PC-3 (cell line): ENCODE measurements at regions of chrX and their contacts with region 1.

Region 1: DNA sequence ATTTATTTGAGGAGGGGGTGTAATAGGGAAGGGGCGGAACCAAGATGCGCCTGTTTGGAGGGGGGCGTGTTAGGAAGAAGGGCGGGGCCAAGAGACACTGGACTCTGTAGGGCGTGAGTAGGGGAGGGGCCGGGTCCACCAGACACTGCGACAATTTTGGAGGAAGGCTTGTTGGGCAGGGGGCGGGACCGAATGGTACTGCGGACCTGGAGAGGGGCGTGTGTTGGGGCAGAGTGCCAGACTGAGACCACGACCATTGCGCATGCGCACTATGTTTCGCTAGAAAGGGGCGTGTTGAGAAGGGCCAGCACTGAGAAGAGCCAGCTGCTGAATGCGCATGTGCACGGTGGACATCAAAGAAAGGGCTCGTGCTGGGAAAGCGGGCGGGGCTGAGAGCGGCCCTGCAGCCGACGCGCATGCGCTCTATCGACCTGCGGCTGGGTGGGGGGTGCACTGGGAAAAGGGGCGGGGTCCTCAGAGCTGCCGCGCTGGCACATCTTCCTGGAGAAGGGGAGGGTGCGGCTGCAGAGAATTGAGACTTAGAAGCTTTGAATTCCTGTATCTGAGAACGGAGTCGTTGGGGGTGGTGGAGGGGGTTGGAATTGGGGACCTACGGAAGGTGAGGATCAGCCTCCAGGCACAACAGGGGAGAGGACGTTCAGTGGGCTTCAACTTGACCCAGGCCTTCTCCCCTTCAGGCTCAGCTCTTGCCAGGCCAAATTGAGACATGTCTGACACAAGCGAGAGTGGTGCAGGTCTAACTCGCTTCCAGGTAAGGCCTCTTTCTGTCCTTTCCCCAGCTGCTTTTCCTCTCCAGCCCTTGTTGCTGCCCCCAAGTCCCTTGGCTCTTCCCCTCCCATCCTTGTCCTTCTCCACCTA is 1.3 kb downstream of the MAGED2 start:
- DNase-seq: peak; percentile 96
- ATAC-seq: peak; percentile 88
- H3K4me3 ChIP-seq: peak overlapping the region; percentile 83
- H3K27ac ChIP-seq: peak overlapping the region; percentile 33; the same call in 1 of the 2 replicates
- H3K4me1 ChIP-seq: 0 out of 2 replicates have a peak, but pooled peaks cover 7% of the 10 kb centered on the region
- H3K27me3 ChIP-seq: peaks cover under 1% of the 10 kb centered on the region
- CTCF ChIP-seq: no peak

Region 2: GRCh38 chrX:54248309-54248708 is 560.5 kb before region 1 on chrX:
- CTCF ChIA-PET with region 1: no interaction called
- POLR2A ChIA-PET with region 1: no interaction called
- intact Hi-C with region 1: loop called (anchors 10 kb)
- DNase-seq: peak; percentile 61
- ATAC-seq: peak; percentile 81
- H3K4me3 ChIP-seq: no peak overlapping the region
- H3K27ac ChIP-seq: no peak overlapping the region
- H3K4me1 ChIP-seq: no peaks in the 10 kb centered on the region
- H3K27me3 ChIP-seq: no peaks in the 10 kb centered on the region
- CTCF ChIP-seq: peak; percentile 65

Region 3: DNA sequence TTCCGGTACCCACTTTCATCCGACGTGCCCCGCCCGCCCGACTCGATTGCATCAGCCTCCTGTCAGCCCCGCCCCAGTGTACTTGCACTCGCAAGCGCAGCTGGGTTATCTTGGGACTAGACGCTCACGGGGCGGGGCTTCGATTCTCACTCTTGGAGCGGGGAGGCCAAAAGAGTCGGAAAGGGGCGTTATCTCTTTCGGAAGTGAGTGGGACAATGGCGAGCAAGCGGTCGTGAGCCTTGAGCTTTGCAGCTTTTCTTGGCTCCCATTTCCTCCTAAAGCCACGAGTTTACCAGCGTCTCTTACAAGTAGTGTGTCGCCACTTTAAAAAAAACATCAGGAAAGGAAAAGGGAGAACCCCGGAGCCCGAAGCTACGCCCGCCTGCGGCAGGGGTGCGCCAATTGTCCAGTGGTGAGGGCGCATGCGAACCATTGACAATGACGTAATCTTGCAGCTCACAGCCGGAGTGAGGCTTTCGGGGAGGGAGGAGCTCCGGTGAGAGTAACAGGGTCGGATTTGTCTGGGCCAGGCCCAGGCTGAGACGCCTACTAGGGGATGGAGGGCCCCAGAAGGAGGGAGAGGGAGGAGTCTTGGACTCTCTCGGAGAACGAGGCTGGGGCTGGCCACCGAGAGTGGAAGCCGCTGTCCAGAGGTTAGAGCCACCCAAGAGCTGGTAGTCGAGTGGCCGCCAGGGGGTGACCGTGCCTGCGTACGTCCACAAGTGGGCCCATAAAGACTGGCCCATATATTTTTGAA is 169.3 kb before region 1 on chrX:
- CTCF ChIA-PET with region 1: no interaction called
- POLR2A ChIA-PET with region 1: interaction called, 6 read pairs
- intact Hi-C with region 1: loop called (anchors 1 kb)
- DNase-seq: peak; percentile 91
- ATAC-seq: peak; percentile 94
- H3K4me3 ChIP-seq: peak overlapping the region; percentile 77
- H3K27ac ChIP-seq: peak overlapping the region; percentile 82
- H3K4me1 ChIP-seq: peaks cover 5% of the 10 kb centered on the region
- H3K27me3 ChIP-seq: no peaks in the 10 kb centered on the region
- CTCF ChIP-seq: peak; percentile 78

Region 4: DNA sequence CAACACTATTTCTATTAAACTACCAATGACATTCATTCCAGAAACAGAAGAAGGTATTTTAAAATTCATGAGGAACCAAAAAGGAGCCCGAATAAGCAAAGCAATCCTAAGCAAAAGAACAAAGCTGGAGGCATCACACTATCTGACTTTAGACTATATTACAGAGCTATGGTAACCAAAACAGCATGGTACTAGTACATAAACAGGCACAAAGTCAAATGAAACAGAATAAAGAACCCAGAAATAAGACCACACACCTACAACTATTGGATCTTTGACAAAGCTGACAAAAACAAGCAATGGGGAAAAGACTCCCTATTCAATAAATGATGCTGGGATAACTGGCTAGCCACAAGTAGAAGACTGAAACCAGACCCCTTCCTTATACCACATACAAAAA is 133.1 kb before region 1 on chrX:
- CTCF ChIA-PET with region 1: no interaction called
- POLR2A ChIA-PET with region 1: interaction called, 14 read pairs
- intact Hi-C with region 1: no loop called
- DNase-seq: no peak
- ATAC-seq: no peak
- H3K4me3 ChIP-seq: no peak overlapping the region
- H3K27ac ChIP-seq: no peak overlapping the region
- H3K4me1 ChIP-seq: no peaks in the 10 kb centered on the region
- H3K27me3 ChIP-seq: no peaks in the 10 kb centered on the region
- CTCF ChIP-seq: no peak

Region 5: DNA sequence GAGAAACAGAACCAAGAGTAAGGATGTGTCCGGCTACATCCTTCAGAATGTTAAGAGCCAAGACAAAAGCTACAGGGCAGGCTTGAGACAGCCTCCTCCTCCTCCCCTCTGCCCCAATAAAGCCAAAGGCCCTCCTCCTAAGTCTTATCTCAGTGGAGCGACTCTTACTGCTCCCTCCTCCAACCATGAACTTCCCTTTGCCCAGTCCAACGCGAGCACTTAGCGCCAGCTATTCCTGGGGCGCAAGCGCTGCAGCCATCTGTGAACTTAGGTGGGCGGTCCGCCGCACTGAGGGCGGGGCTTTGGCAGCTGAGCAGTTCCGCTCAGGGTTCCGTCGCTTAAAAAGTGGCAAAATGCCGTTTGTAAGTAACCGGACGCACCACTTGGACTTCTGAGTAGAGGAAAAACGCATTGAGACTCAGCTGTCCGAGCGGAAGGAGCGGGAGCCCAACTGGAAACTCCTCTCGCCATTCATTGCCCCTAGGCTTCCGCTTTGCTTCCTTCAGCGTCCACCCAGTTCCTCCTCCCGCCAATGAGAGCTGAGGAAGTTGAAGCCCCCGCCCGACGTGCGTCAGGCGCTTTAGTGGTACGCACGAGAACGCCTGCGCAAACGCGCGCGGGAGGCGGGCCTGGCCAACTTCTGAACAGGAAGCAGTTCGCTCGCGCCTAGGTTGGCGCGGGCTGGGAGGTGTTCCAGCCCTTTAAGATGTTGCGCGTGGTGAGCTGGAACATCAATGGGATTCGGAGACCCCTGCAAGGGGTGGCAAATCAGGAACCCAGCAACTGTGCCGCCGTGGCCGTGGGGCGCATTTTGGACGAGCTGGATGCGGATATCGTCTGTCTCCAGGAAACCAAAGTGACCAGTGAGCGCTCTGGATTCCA is 191.1 kb after region 1 on chrX and contains the start of gene APEX2:
- CTCF ChIA-PET with region 1: no interaction called
- POLR2A ChIA-PET with region 1: no interaction called
- intact Hi-C with region 1: loop called (anchors 10 kb)
- DNase-seq: peak; percentile 94
- ATAC-seq: peak; percentile 91
- H3K4me3 ChIP-seq: peak within 1 kb of the TSS; percentile 91
- H3K27ac ChIP-seq: peak within 1 kb of the TSS; percentile 95
- H3K4me1 ChIP-seq: peaks cover 44% of the 10 kb centered on the region
- H3K27me3 ChIP-seq: no peaks in the 10 kb centered on the region
- CTCF ChIP-seq: no peak
- total RNA-seq, gene APEX2: 24.7 and 30.9 TPM in 2 replicates